ENCODE measurements at regions of chr19 and their contacts with region 1.

Region 1: GRCh38 chr19:18473003-18473705 is 35.2 kb upstream of the ISYNA1 start:
- DNase-seq: no peak
- H3K4me3 ChIP-seq: no peak overlapping the region
- H3K27ac ChIP-seq: peak overlapping the region in 3 of 4 donors; percentile 37 to 61 (median 56)
- H3K4me1 ChIP-seq: peaks cover 55 to 94% (median 85%) of the 10 kb centered on the region in 4 donors
- H3K27me3 ChIP-seq: no peaks in the 10 kb centered on the region
- CTCF ChIP-seq: no peak
- EP300 ChIP-seq: no peak
- POLR2A ChIP-seq: no peak

Region 2: DNA sequence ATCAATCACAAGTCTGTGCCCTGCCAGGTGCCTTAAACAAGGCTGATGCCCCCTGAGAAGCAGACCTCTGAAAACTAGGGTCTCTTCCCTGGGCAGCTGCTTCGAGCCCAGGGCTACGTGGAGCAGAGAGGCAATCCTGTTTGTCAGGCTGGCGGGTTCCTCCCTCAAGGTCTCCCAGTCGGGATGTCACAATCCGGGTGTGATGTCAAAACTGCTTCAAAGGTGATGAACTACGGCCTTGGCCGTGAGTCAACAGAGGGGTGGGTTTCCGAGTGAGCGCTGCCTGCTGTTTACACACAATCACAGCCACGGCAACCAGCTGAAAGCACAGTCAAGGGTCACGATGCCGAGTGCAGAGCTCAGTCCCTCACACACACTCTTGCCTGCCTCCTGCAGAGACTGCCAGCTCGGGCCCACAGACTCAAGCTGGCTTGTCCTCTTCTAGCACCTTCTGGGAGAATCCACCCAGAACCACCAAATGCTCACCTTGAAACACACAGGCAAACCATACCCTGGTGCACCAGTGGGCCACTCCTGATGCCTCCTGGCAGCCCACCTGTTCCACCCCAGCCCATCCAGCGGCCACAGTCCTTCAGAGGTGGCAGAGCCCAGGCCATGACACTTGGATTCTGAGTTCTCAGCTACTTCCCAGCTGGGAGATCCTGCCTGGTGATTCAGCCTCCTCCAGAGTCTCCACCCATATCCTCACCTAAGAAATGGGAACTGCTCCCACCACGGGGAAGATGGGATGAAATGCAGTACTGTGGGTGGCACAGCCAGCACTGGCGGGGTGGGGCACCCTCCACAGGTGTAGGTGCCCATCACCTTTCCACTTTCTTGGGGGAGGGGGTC is 41.9 kb after region 1 on chr19:
- intact Hi-C with region 1: loop called (anchors 5 kb)
- DNase-seq: no peak
- H3K4me3 ChIP-seq: no peak overlapping the region
- H3K27ac ChIP-seq: peak overlapping the region; percentile 43 to 71 (median 48)
- H3K4me1 ChIP-seq: peaks cover 66 to 96% (median 82%) of the 10 kb centered on the region in 4 donors
- H3K27me3 ChIP-seq: no peaks in the 10 kb centered on the region
- CTCF ChIP-seq: no peak
- EP300 ChIP-seq: no peak
- POLR2A ChIP-seq: no peak

Region 3: DNA sequence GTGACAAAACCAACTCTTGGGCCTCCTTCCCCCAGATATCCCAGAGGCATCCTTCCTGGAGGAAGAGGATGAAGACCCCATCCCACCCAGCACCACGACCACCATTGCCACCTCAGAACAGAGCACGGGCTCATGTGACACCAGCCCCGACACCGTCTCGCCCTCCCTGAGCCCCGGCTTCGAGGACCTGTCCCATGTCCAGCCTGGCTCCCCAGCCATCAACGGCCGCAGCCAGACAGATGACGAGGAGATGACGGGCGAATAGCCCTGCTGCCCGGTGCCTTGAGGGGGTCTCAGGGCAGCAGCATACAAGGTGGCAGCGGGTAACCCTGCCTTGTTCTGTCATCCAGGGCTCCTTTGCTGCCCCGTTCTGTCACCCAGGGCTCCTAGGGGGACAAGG is 95.2 kb after region 1 on chr19:
- intact Hi-C with region 1: loop called (anchors 5 kb)
- DNase-seq: no peak
- H3K4me3 ChIP-seq: no peak overlapping the region
- H3K27ac ChIP-seq: no peak overlapping the region
- H3K4me1 ChIP-seq: peaks cover 16 to 20% (median 19%) of the 10 kb centered on the region in 4 donors
- H3K27me3 ChIP-seq: no peaks in the 10 kb centered on the region
- CTCF ChIP-seq: no peak
- EP300 ChIP-seq: no peak
- POLR2A ChIP-seq: no peak